ENCODE measurements at regions of chr1 and their contacts with region 1.

Region 1: GRCh38 chr1:231421993-231422764 is at the start of gene EGLN1:
- DNase-seq: peak; percentile 82
- ATAC-seq: peak; percentile 84
- H3K4me3 Mint-ChIP-seq: peak within 1 kb of the TSS; percentile 97
- H3K27ac Mint-ChIP-seq: peak within 1 kb of the TSS; percentile 91
- H3K4me1 Mint-ChIP-seq: peaks cover 43% of the 10 kb centered on the region
- H3K27me3 Mint-ChIP-seq: no peaks in the 10 kb centered on the region
- CTCF ChIP-seq: no peak
- total RNA-seq, gene EGLN1: 10.7 and 15.6 TPM in 2 replicates

Region 2: DNA sequence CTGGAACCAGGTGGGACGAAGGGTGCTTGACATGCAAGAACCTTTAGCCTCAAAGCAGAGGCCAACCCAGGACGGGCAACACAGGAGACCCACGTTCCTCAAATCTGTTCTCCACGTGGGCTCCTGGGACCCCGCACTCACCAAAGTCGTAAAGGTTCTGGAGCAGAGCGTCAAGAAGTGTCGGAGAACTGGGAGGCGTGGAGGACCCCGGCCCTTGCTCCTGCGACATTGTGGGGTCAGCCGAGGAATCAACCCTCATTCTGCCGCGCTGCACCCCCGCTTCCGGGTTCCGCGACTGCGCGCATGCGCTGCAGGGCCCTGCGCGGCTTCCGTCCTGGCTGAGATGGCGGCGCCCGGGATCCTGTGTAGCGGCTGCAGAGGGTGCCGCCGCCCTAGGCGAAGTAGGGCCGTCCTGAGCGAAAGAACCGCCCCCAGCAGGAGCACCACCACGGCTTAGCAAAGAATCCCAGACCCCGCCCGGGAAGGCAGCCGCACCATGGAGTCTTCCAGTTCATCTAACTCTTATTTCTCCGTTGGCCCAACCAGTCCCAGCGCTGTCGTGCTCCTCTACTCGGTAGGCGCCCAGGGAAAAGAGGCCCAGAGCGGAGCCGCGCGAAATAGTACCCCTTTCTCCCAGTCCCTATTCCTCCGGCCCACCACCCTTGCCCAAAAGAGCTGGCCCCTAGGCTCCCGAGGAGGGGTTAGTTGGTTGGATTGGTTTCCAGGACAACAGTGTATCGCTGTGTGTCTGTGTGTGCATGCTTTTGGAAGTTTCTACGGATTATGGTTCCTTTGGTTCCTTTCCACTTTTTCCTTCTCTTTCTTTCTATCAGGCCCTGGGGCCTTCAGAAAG is 181.1 kb before region 1 on chr1 and contains the start of gene GNPAT:
- CTCF ChIA-PET with region 1: no interaction called
- POLR2A ChIA-PET with region 1: no interaction called
- intact Hi-C with region 1: loop called (anchors 5 kb)
- DNase-seq: peak; percentile 94
- ATAC-seq: peak; percentile 98
- H3K4me3 Mint-ChIP-seq: peak within 1 kb of the TSS; percentile 93
- H3K27ac Mint-ChIP-seq: peak within 1 kb of the TSS; percentile 94
- H3K4me1 Mint-ChIP-seq: peaks cover 58% of the 10 kb centered on the region
- H3K27me3 Mint-ChIP-seq: no peaks in the 10 kb centered on the region
- CTCF ChIP-seq: no peak
- total RNA-seq, gene GNPAT: 45.7 and 47.4 TPM in 2 replicates

Region 3: GRCh38 chr1:231357831-231358354 is 64.3 kb before region 1 on chr1:
- CTCF ChIA-PET with region 1: no interaction called
- POLR2A ChIA-PET with region 1: no interaction called
- intact Hi-C with region 1: loop called (anchors 5 kb)
- DNase-seq: no peak
- ATAC-seq: peak; percentile 82
- H3K4me3 Mint-ChIP-seq: no peak overlapping the region
- H3K27ac Mint-ChIP-seq: no peak overlapping the region
- H3K4me1 Mint-ChIP-seq: peaks cover 10% of the 10 kb centered on the region
- H3K27me3 Mint-ChIP-seq: no peaks in the 10 kb centered on the region
- CTCF ChIP-seq: peak; percentile 29

Region 4: DNA sequence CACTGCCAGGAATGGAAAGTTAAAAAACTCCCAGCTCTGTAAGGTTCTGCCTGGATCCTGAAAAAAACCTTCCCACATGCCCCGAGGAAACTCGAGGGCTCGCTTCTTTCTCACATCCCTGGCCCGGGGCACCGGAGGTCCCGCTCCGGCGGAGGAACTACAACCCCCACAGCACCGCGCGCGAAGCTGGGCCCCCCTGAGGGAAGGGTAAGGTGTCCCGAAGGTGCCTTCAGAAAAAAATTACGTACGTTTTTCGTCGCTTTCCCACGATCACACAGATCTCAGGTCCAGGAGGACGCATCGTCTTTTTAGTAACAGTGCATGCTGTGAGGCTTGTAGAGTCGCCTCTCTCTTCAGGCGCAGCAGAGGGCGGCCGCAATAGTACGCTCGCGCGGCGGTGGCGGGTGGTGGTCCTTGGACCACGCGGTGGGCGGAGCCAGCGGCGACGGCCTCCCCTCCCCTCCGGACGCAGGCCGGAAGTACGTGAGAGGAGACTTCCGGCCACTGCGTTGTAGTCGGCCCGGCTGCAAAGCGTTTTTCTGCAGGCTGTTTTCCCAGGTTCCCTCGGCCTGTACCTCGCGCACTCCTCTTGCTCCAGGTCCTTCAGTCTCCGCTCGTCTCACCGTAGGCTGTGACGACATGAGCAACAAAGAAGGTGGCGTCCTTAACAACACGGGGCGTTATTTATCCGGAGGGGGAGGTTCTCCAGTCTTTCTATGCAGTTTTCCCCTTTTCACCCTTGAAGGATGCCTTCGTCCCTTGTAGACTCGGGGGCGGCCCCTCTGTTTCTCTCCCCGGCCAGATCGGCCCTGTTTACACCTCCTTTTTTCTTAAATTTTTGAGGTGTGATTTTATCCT is 106.2 kb after region 1 on chr1 and contains the start of gene TSNAX:
- CTCF ChIA-PET with region 1: no interaction called
- POLR2A ChIA-PET with region 1: interaction called, 15 read pairs
- intact Hi-C with region 1: loop called (anchors 1 kb)
- DNase-seq: peak; percentile 89
- ATAC-seq: peak; percentile 95
- H3K4me3 Mint-ChIP-seq: peak within 1 kb of the TSS; percentile 99
- H3K27ac Mint-ChIP-seq: peak within 1 kb of the TSS; percentile 100
- H3K4me1 Mint-ChIP-seq: peaks cover 33% of the 10 kb centered on the region
- H3K27me3 Mint-ChIP-seq: no peaks in the 10 kb centered on the region
- CTCF ChIP-seq: no peak
- total RNA-seq, gene TSNAX: 30.0 and 38.7 TPM in 2 replicates

Region 5: GRCh38 chr1:231612393-231613089 is 190.4 kb after region 1 on chr1:
- CTCF ChIA-PET with region 1: no interaction called
- POLR2A ChIA-PET with region 1: no interaction called
- intact Hi-C with region 1: loop called (anchors 1 kb)
- DNase-seq: peak; percentile 51
- ATAC-seq: peak; percentile 93
- H3K4me3 Mint-ChIP-seq: peak overlapping the region; percentile 68
- H3K27ac Mint-ChIP-seq: peak overlapping the region; percentile 78
- H3K4me1 Mint-ChIP-seq: peaks cover 65% of the 10 kb centered on the region
- H3K27me3 Mint-ChIP-seq: peaks cover 3% of the 10 kb centered on the region
- CTCF ChIP-seq: no peak

Region 6: GRCh38 chr1:231626535-231626945 is 204.4 kb after region 1 on chr1 and contains the start of gene DISC1:
- CTCF ChIA-PET with region 1: no interaction called
- POLR2A ChIA-PET with region 1: no interaction called
- intact Hi-C with region 1: loop called (anchors 5 kb)
- DNase-seq: peak; percentile 34
- ATAC-seq: peak; percentile 72
- H3K4me3 Mint-ChIP-seq: peak within 1 kb of the TSS; percentile 87
- H3K27ac Mint-ChIP-seq: peak within 1 kb of the TSS; percentile 76
- H3K4me1 Mint-ChIP-seq: peaks cover 23% of the 10 kb centered on the region
- H3K27me3 Mint-ChIP-seq: peaks cover 11% of the 10 kb centered on the region
- CTCF ChIP-seq: no peak
- total RNA-seq, gene DISC1: 2.4 TPM in 2 replicates

Measured in activated B cell treated with CpG ODN at 0.5 μM for 24 hours (primary cell).